GM10248 (cell line): ENCODE measurements at regions of chr14 and their contacts with region 1.

Region 1: DNA sequence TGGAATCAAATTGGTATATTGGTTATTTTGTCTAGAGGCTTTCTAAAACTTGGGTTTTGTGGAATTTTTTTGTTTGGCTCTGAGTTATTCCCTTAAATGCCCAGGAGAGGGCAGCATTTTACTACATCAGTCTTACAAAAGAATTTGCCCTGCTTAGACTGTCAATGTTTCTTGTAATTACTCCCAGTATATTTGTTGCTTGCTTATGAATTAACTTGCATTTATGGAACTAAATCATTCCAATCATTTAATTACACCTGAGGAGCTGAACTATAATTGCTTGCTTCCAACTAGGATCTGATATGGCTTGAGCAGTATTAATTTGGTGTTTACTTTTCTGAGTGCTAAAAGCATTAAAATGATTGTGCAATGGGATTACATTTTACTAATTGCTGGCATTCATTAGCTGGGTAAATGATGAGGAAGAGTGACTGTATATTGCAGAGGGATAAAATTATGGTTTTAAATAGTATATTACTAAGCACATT is 48.7 kb downstream of the MIPOL1 start:
- DNase-seq: peak; percentile 19
- CTCF ChIP-seq: peak; percentile 58

Region 2: GRCh38 chr14:36835145-36835544 is 411.3 kb before region 1 on chr14:
- CTCF ChIA-PET with region 1: no interaction called
- POLR2A ChIA-PET with region 1: no interaction called
- DNase-seq: no peak
- CTCF ChIP-seq: no peak

Region 3: DNA sequence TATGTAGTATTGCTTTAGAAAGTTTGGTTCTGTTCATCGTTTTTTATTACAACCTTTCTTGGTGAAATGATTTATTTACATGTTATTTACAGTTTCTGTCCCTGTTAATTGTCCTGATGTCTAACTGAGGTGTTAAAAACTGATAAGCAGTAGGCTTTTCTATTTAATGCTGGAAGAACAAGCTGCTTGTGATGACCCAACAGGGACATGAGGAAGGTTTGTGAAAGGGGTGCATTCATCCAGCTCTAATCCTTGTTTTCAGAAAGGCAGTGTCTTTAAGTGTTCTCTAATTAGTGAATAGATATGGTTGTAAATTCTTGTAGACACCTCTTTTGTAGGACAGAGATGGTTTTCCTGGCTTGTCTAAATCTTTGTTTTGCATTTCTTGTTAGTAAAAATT is 157.2 kb after region 1 on chr14:
- CTCF ChIA-PET with region 1: no interaction called
- POLR2A ChIA-PET with region 1: no interaction called
- DNase-seq: no peak
- CTCF ChIP-seq: no peak

Region 4: GRCh38 chr14:37874429-37875191 is 628.1 kb after region 1 on chr14:
- CTCF ChIA-PET with region 1: interaction called, 25 read pairs
- POLR2A ChIA-PET with region 1: no interaction called
- DNase-seq: peak; percentile 60
- CTCF ChIP-seq: peak; percentile 85